ENCODE measurements at regions of chr16 and their contacts with region 1.

Region 1: DNA sequence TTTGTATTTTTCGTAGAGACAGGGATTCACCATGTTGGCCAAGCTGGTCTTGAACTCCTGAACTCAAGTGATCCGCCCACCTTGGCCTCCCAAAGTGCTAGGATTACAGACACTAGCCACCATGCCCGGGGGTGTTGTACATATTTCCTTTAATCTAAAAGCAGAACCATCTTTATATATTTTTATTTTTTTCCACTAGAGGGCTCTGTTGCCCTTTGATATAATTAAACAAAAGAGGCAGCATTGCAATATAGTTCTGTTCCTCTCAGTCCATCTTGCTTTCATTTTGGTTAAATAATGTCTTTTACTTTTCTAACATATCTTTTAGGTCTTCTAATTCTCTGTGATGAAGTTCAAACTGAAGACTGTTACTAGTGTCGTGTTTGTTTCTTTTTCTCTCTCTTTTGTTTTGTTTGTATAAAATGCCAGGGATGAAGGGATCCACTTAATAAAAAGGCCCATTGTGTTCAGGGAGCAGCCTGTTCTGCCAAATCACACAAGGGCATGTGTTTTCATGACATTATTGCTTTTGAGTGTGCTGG is 23.4 kb downstream of the WWOX start:
- DNase-seq: peak; percentile 74
- H3K4me3 ChIP-seq: peak overlapping the region; percentile 55
- H3K27ac ChIP-seq: peak overlapping the region; percentile 16; the same call in 1 of the 2 replicates
- H3K4me1 ChIP-seq: peaks cover 3% of the 10 kb centered on the region; the same call in 1 of the 2 replicates
- H3K27me3 ChIP-seq: no peaks in the 10 kb centered on the region

Region 2: GRCh38 chr16:78184238-78185183 is 61.7 kb after region 1 on chr16:
- in situ Hi-C with region 1: no loop called
- DNase-seq: peak; percentile 35
- H3K4me3 ChIP-seq: peak overlapping the region; percentile 37; the same call in 1 of the 2 replicates
- H3K27ac ChIP-seq: no peak overlapping the region
- H3K4me1 ChIP-seq: no peaks in the 10 kb centered on the region
- H3K27me3 ChIP-seq: 0 out of 2 replicates have a peak, but pooled peaks cover 7% of the 10 kb centered on the region

Region 3: DNA sequence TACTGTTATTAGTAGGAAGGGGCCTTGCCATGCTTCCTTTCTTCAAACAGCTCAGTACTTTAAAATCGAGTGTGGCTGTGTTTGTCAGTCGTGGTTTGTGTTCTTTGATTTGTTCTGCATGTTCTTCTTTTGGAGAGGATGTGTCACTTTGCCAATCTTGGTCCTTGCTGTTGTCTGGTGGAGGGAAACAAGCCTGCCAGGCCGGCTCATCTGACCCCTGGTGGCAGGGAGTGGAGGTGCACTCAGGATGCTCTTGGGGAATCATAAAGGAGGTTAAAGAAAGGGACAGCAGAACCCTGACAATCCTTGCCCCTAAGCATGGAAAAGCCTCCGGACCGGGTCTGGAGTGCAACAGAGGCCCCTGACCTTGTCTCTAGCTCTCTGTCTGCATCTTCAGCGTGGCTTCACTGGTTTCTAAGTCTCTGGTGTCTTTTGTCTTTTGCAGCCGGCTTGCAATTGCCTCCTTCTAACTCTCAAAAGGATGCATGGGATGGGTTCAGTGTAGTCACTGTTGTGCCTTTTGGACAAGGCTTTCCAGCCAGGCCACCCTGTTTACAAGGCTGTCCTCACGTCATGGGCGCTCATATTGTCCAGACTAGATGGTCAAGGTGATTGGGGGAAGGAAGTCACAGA is 112.4 kb after region 1 on chr16:
- in situ Hi-C with region 1: loop called (anchors 10 kb)
- DNase-seq: peak; percentile 75
- H3K4me3 ChIP-seq: no peak overlapping the region
- H3K27ac ChIP-seq: no peak overlapping the region
- H3K4me1 ChIP-seq: no peaks in the 10 kb centered on the region
- H3K27me3 ChIP-seq: no peaks in the 10 kb centered on the region

Measured in GM23248 (cell line).